A673 (cell line): ENCODE measurements at regions of chr15 and their contacts with region 1.

Region 1: GRCh38 chr15:68252925-68253534 is 23.5 kb upstream of the CLN6 start:
- DNase-seq: peak; percentile 86
- H3K4me3 ChIP-seq: no peak overlapping the region
- H3K27ac ChIP-seq: no peak overlapping the region
- H3K4me1 ChIP-seq: peaks cover 4% of the 10 kb centered on the region
- H3K27me3 ChIP-seq: no peaks in the 10 kb centered on the region
- CTCF ChIP-seq: peak; percentile 82

Region 2: GRCh38 chr15:68383161-68384074 is 130.4 kb after region 1 on chr15:
- CTCF ChIA-PET with region 1: no interaction called
- POLR2A ChIA-PET with region 1: no interaction called
- intact Hi-C with region 1: loop called (anchors 1 kb)
- DNase-seq: peak; percentile 63
- H3K4me3 ChIP-seq: no peak overlapping the region
- H3K27ac ChIP-seq: no peak overlapping the region
- H3K4me1 ChIP-seq: no peaks in the 10 kb centered on the region
- H3K27me3 ChIP-seq: no peaks in the 10 kb centered on the region
- CTCF ChIP-seq: peak; percentile 71